Activated T-helper 2 cell treated with anti-CD3 and anti-CD28 coated beads, Interferon-gamma antibody, Interleukin-2, Interleukin-4, amounts not matched to agents 10 μg/mL and 5 μg/mL and 100 μg/mL, durations not matched to agents 14 hours and 24 hours and 36 hours (primary cell): ENCODE measurements at regions of chr2 and their contacts with region 1.

Region 1: GRCh38 chr2:189347540-189347939 is 93.7 kb upstream of the WDR75 start:
- DNase-seq: no peak
- H3K4me3 Mint-ChIP-seq: no peak overlapping the region
- H3K27ac Mint-ChIP-seq: no peak overlapping the region
- H3K4me1 Mint-ChIP-seq: peaks cover 7% of the 10 kb centered on the region
- H3K27me3 Mint-ChIP-seq: no peaks in the 10 kb centered on the region

Region 2: GRCh38 chr2:189096769-189097447 is 250.6 kb before region 1 on chr2:
- intact Hi-C with region 1: loop called (anchors 5 kb)
- DNase-seq: no peak
- H3K4me3 Mint-ChIP-seq: no peak overlapping the region
- H3K27ac Mint-ChIP-seq: no peak overlapping the region
- H3K4me1 Mint-ChIP-seq: no peaks in the 10 kb centered on the region
- H3K27me3 Mint-ChIP-seq: no peaks in the 10 kb centered on the region

Region 3: GRCh38 chr2:189142893-189143759 is 204.4 kb before region 1 on chr2:
- intact Hi-C with region 1: loop called (anchors 1 kb)
- DNase-seq: peak; percentile 17
- H3K4me3 Mint-ChIP-seq: no peak overlapping the region
- H3K27ac Mint-ChIP-seq: no peak overlapping the region
- H3K4me1 Mint-ChIP-seq: no peaks in the 10 kb centered on the region
- H3K27me3 Mint-ChIP-seq: no peaks in the 10 kb centered on the region